MCF 10A (cell line): ENCODE measurements at regions of chr9 and their contacts with region 1.

Region 1: DNA sequence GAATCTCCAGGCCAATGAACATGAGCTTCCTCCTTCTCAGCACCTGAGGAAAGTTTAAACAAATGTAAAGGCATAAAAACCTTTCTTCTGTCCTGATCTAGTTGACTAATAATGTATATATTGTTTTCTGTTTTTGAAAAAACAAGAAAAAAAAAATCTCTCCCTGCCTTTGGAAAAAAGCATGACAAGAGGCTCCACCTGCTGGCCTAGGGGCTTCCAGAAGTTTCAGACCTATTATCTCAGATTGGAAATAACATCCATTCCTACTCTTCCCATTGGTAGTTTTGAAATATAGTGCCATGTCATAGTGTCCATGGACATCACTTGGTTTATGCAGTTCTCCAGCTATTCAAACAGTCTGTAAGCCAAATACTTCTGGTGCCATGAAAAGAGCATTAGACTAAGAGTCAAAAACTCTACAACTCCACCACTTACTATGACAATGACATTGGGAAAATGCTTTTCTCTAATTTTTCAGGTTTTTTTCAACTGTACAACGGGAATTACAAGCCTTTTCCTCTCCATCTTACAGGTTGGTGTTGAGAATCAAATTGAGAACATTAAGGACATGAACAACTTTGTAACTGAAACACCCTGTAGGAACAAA is 409.6 kb upstream of the MPDZ start:
- DNase-seq: peak; percentile 31
- H3K4me3 Mint-ChIP-seq: no peak overlapping the region
- H3K27ac Mint-ChIP-seq: no peak overlapping the region
- H3K4me1 Mint-ChIP-seq: peaks cover 13% of the 10 kb centered on the region
- H3K27me3 Mint-ChIP-seq: no peaks in the 10 kb centered on the region
- CTCF ChIP-seq: peak; percentile 33

Region 2: GRCh38 chr9:13351778-13352386 is 337.2 kb before region 1 on chr9:
- CTCF ChIA-PET with region 1: interaction called, 3 read pairs
- POLR2A ChIA-PET with region 1: no interaction called
- intact Hi-C with region 1: loop called (anchors 5 kb)
- DNase-seq: peak; percentile 61
- H3K4me3 Mint-ChIP-seq: no peak overlapping the region
- H3K27ac Mint-ChIP-seq: no peak overlapping the region
- H3K4me1 Mint-ChIP-seq: no peaks in the 10 kb centered on the region
- H3K27me3 Mint-ChIP-seq: no peaks in the 10 kb centered on the region
- CTCF ChIP-seq: peak; percentile 45

Region 3: DNA sequence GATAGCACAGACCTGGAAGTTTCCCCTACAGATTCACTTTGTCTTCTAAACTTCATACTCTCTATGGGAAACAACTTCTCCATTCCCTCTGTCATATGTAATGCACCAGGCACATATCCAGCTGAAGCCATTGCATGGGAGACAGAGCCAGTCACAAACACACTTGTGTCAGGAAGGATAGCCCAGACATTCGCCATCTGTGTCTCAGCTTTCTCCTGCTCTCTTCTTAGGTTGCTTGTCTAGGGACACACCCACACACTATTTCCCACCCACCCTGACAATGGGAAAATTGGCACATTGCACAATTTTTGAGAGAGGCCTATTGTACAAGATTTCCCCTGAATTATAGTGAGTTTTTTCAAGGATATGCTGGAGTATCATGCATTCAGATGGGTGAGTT is 251.2 kb before region 1 on chr9:
- CTCF ChIA-PET with region 1: interaction called, 13 read pairs
- POLR2A ChIA-PET with region 1: no interaction called
- intact Hi-C with region 1: no loop called
- DNase-seq: no peak
- H3K4me3 Mint-ChIP-seq: no peak overlapping the region
- H3K27ac Mint-ChIP-seq: no peak overlapping the region
- H3K4me1 Mint-ChIP-seq: no peaks in the 10 kb centered on the region
- H3K27me3 Mint-ChIP-seq: no peaks in the 10 kb centered on the region
- CTCF ChIP-seq: no peak

Region 4: GRCh38 chr9:13450723-13451122 is 238.4 kb before region 1 on chr9:
- CTCF ChIA-PET with region 1: interaction called, 50 read pairs
- POLR2A ChIA-PET with region 1: no interaction called
- intact Hi-C with region 1: loop called (anchors 1 kb)
- DNase-seq: no peak
- H3K4me3 Mint-ChIP-seq: no peak overlapping the region
- H3K27ac Mint-ChIP-seq: no peak overlapping the region
- H3K4me1 Mint-ChIP-seq: peaks cover 6% of the 10 kb centered on the region
- H3K27me3 Mint-ChIP-seq: no peaks in the 10 kb centered on the region
- CTCF ChIP-seq: no peak